CD8-positive, alpha-beta memory T cell (primary cell): ENCODE measurements at regions of chr15 and their contacts with region 1.

Region 1: GRCh38 chr15:92797168-92797951 is 102.8 kb upstream of the CHD2 start:
- DNase-seq: peak in 4 of 5 donors; percentile 16 to 68 (median 58)
- H3K4me3 ChIP-seq: no peak overlapping the region
- H3K4me3 Mint-ChIP-seq: no peak overlapping the region
- H3K27ac ChIP-seq: no peak overlapping the region
- H3K27ac Mint-ChIP-seq: peak overlapping the region in 5 of 8 donors; percentile 52 to 89 (median 79)
- H3K4me1 ChIP-seq: no peaks in the 10 kb centered on the region
- H3K4me1 Mint-ChIP-seq: peaks cover 4 to 7% (median 6%) of the 10 kb centered on the region in 3 donors
- H3K27me3 ChIP-seq: no peaks in the 10 kb centered on the region
- H3K27me3 Mint-ChIP-seq: no peaks in the 10 kb centered on the region

Region 2: GRCh38 chr15:92780843-92781242 is 16.5 kb before region 1 on chr15:
- CTCF ChIA-PET with region 1: no interaction called
- POLR2A ChIA-PET with region 1: no interaction called
- DNase-seq: no peak
- H3K4me3 ChIP-seq: no peak overlapping the region
- H3K4me3 Mint-ChIP-seq: no peak overlapping the region
- H3K27ac ChIP-seq: no peak overlapping the region
- H3K27ac Mint-ChIP-seq: no peak overlapping the region
- H3K4me1 ChIP-seq: no peaks in the 10 kb centered on the region
- H3K4me1 Mint-ChIP-seq: no peaks in the 10 kb centered on the region
- H3K27me3 ChIP-seq: no peaks in the 10 kb centered on the region
- H3K27me3 Mint-ChIP-seq: no peaks in the 10 kb centered on the region

Region 3: GRCh38 chr15:92917606-92918407 is 120.4 kb after region 1 on chr15:
- CTCF ChIA-PET with region 1: interaction called, 119 read pairs
- POLR2A ChIA-PET with region 1: interaction called, 4 read pairs
- DNase-seq: peak; percentile 83 to 93 (median 86)
- H3K4me3 ChIP-seq: peak overlapping the region; percentile 25
- H3K4me3 Mint-ChIP-seq: peak overlapping the region in 6 of 7 donors; percentile 55 to 79 (median 64)
- H3K27ac ChIP-seq: peak overlapping the region; percentile 20
- H3K27ac Mint-ChIP-seq: peak overlapping the region; percentile 67 to 100 (median 93)
- H3K4me1 ChIP-seq: peaks cover 90% of the 10 kb centered on the region
- H3K4me1 Mint-ChIP-seq: peaks cover 74 to 94% (median 90%) of the 10 kb centered on the region in 3 donors
- H3K27me3 ChIP-seq: no peaks in the 10 kb centered on the region
- H3K27me3 Mint-ChIP-seq: peaks cover 0 to 3% of the 10 kb centered on the region in 2 donors

Region 4: GRCh38 chr15:92924216-92924615 is 126.9 kb after region 1 on chr15:
- CTCF ChIA-PET with region 1: interaction called, 119 read pairs
- POLR2A ChIA-PET with region 1: interaction called, 6 read pairs
- DNase-seq: no peak
- H3K4me3 ChIP-seq: no peak overlapping the region
- H3K4me3 Mint-ChIP-seq: no peak overlapping the region
- H3K27ac ChIP-seq: no peak overlapping the region
- H3K27ac Mint-ChIP-seq: peak overlapping the region in 6 of 8 donors; percentile 1 to 93 (median 70)
- H3K4me1 ChIP-seq: peaks cover 51% of the 10 kb centered on the region
- H3K4me1 Mint-ChIP-seq: peaks cover 67 to 97% (median 96%) of the 10 kb centered on the region in 3 donors
- H3K27me3 ChIP-seq: no peaks in the 10 kb centered on the region
- H3K27me3 Mint-ChIP-seq: peaks cover 0 to 1% of the 10 kb centered on the region in 2 donors

Region 5: DNA sequence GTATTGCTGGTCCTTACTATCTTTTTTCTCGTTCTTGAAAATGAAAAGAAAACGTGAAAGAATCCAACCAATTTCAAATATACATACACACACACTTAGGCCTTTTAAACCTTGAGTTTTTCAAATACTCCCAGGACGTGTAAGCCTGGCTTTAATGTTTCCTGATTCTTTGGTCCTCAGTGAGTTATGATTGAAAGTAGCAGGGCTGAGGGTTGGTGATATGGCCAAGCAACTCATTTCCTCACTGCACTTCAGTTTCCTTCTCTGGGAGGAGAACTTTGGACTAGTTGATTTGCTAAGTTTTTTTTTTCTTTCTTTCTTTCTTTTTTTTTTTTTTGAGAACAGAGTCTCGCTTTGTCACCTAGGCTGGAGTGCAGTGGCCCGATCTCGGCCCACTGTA is 137.4 kb after region 1 on chr15:
- CTCF ChIA-PET with region 1: interaction called, 12 read pairs
- POLR2A ChIA-PET with region 1: no interaction called
- DNase-seq: no peak
- H3K4me3 ChIP-seq: no peak overlapping the region
- H3K4me3 Mint-ChIP-seq: no peak overlapping the region
- H3K27ac ChIP-seq: no peak overlapping the region
- H3K27ac Mint-ChIP-seq: peak overlapping the region in 4 of 8 donors; percentile 0 to 61 (median 28)
- H3K4me1 ChIP-seq: peaks cover 25% of the 10 kb centered on the region
- H3K4me1 Mint-ChIP-seq: peaks cover 50 to 67% (median 56%) of the 10 kb centered on the region in 3 donors
- H3K27me3 ChIP-seq: no peaks in the 10 kb centered on the region
- H3K27me3 Mint-ChIP-seq: no peaks in the 10 kb centered on the region

Region 6: DNA sequence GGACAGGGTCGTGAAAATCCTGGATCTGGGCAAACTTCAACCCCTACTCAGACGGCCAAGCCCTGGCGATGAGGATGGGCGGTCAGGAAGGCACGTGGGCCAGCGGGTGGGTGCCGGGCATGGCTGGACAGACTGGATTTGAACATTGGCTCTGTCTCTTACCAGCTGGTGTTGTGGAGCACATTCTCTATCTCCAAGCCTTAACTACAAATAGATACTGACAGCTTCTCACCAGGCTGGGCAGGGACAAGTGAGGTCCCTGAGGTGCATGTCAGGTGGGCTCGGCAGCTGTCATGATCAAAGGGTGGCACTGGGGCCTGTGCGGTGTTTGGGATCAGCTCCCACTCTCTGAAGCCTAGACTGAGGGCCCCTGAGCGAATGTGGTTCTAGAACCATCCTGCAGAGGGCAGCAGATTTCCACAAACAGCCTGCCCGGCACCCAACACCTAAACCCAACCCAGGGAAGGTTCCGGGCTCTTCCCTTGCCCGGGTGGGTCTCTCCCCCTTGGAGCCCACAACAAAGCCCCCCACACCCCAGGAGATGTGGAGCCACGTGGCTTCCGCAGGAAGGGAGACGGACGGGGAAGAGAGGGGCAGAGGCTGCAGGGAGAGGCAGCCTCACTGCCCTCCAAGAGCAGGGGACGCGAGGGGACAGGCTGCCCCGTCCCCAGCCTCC is 233.2 kb after region 1 on chr15:
- CTCF ChIA-PET with region 1: interaction called, 19 read pairs
- POLR2A ChIA-PET with region 1: no interaction called
- DNase-seq: peak; percentile 51 to 73 (median 54)
- H3K4me3 ChIP-seq: no peak overlapping the region
- H3K4me3 Mint-ChIP-seq: peak overlapping the region in 1 of 7 donors; percentile 5
- H3K27ac ChIP-seq: no peak overlapping the region
- H3K27ac Mint-ChIP-seq: peak overlapping the region; percentile 12 to 86 (median 70)
- H3K4me1 ChIP-seq: peaks cover 8% of the 10 kb centered on the region
- H3K4me1 Mint-ChIP-seq: peaks cover 18 to 40% (median 39%) of the 10 kb centered on the region in 3 donors
- H3K27me3 ChIP-seq: no peaks in the 10 kb centered on the region
- H3K27me3 Mint-ChIP-seq: peaks cover 0 to 4% of the 10 kb centered on the region in 2 donors